ENCODE measurements at regions of chr5 and their contacts with region 1.

Region 1: GRCh38 chr5:9059920-9060691 is 485.8 kb downstream of the SEMA5A start:
- DNase-seq: no peak

Region 2: GRCh38 chr5:7425830-7426229 is 1634.3 kb before region 1 on chr5:
- intact Hi-C with region 1: loop called in 1 of 2 experiments (anchors 5 kb)
- DNase-seq: no peak

Region 3: GRCh38 chr5:9046756-9047481 is 13.2 kb before region 1 on chr5:
- intact Hi-C with region 1: no loop called
- DNase-seq: no peak

Region 4: GRCh38 chr5:9099689-9100088 is 39.6 kb after region 1 on chr5:
- intact Hi-C with region 1: no loop called
- DNase-seq: no peak

Measured in posterior vena cava (tissue), 2 donors.